Activated CD8-positive, alpha-beta memory T cell treated with anti-CD3 and anti-CD28 coated beads, Interleukin-2, amount 10 ng/mL, durations not matched to agents 7 days and 5 days (primary cell): ENCODE measurements at regions of chr16 and their contacts with region 1.

Region 1: GRCh38 chr16:57576429-57576870 is 34.0 kb downstream of the ADGRG5 start:
- DNase-seq: peak; percentile 92
- ATAC-seq: peak; percentile 70
- H3K4me3 Mint-ChIP-seq: no peak overlapping the region
- H3K27ac Mint-ChIP-seq: peak overlapping the region; percentile 91
- H3K4me1 Mint-ChIP-seq: peaks cover 61% of the 10 kb centered on the region
- H3K27me3 Mint-ChIP-seq: no peaks in the 10 kb centered on the region

Region 2: DNA sequence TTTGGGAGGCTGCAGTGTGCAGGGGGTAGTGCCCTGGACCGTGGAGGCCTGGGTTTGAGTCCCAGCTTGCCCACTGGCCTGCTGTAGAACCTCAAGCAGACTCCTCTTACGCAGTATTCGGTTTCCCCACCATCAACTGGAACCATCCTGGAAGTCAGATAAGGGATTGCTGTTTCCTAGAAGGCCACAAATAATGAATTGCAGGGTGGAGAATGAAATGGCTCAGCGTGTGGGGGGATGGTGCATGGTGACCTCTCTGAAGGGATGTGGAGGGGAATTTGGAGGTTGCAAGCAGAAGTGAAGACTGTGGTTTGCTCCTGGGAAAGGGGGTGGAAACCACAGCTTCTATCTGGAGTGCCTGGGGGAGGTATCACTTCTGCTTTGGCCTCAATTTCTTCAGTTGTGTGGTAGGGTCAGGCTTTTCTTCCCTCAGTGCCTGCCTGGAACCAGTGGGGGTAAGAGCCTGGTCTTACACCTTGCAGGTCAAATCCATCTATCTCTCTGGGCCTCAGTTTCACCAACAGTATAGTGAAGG is 32.3 kb before region 1 on chr16:
- CTCF ChIA-PET with region 1: interaction called, 22 read pairs
- DNase-seq: peak; percentile 48
- ATAC-seq: no peak
- H3K4me3 Mint-ChIP-seq: peak overlapping the region; percentile 75
- H3K27ac Mint-ChIP-seq: peak overlapping the region; percentile 87
- H3K4me1 Mint-ChIP-seq: peaks cover 79% of the 10 kb centered on the region
- H3K27me3 Mint-ChIP-seq: no peaks in the 10 kb centered on the region

Region 3: DNA sequence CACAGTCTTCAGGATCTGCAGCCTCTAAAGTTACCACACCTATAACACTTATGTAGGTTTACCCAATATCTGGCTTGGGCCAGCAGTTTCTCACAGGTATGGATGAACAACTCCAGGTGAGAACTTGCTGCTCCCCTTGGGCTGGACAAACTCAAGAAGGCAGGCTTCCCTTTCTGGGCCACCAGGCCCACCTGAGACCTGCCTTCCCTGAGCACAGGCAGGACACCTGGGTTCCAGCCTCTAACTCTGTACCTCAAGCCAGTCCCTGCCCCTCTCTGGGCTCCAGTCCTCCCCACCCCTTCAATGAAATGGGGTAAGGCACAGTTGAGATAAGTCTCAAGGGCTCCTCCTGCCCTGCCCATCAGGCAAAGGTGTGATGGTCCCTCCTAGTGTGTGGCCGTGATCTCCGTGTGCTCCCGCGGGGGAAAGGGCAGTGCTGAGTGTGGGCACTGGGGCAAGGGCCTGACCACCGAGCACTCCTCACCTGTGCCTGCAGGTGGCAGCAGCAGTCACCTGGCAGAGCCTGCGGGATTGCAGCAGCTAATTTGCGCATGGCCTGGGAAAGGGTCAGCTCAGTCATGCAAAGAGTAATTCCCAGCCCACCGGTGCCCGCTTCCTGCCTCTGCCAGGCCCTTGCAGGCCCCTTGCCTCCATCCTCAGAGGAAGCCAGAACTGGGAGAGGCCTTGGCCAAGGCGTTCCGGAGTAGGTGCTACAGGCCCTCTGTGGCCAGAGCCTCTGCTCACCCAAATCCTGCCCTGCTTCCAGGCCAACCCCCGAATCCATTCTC is 23.8 kb after region 1 on chr16:
- CTCF ChIA-PET with region 1: interaction called, 210 read pairs
- DNase-seq: peak; percentile 65
- ATAC-seq: no peak
- H3K4me3 Mint-ChIP-seq: no peak overlapping the region
- H3K27ac Mint-ChIP-seq: peak overlapping the region; percentile 99
- H3K4me1 Mint-ChIP-seq: peaks cover 72% of the 10 kb centered on the region
- H3K27me3 Mint-ChIP-seq: no peaks in the 10 kb centered on the region

Region 4: GRCh38 chr16:57639172-57639887 is 62.9 kb after region 1 on chr16:
- CTCF ChIA-PET with region 1: interaction called, 15 read pairs
- DNase-seq: no peak
- ATAC-seq: no peak
- H3K4me3 Mint-ChIP-seq: no peak overlapping the region
- H3K27ac Mint-ChIP-seq: no peak overlapping the region
- H3K4me1 Mint-ChIP-seq: no peaks in the 10 kb centered on the region
- H3K27me3 Mint-ChIP-seq: peaks cover 14% of the 10 kb centered on the region

Region 5: DNA sequence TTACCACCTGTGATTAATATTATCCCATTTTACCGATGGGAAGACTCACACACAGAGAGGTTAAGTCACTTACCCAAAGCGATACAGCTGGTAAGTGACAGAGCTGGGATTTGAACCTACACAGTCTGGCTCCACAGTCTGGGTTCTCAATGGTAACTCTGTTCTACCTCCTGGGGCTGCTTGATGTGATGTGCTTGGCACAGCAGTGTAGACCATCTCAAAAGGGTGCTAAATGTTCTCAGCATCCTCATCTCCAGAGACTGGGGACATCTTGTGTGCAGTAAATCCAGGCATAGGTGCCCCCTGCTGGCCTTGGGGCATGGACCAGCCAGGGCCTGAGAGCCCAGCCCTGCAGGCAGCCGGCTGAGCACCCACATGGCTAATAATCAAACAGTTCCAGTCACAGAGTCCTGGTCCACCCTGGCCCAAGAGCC is 143.7 kb after region 1 on chr16:
- CTCF ChIA-PET with region 1: interaction called, 17 read pairs
- DNase-seq: peak; percentile 80
- ATAC-seq: peak; percentile 93
- H3K4me3 Mint-ChIP-seq: no peak overlapping the region
- H3K27ac Mint-ChIP-seq: no peak overlapping the region
- H3K4me1 Mint-ChIP-seq: peaks cover 4% of the 10 kb centered on the region
- H3K27me3 Mint-ChIP-seq: peaks cover 6% of the 10 kb centered on the region

Region 6: GRCh38 chr16:57757326-57757786 is 180.9 kb after region 1 on chr16:
- CTCF ChIA-PET with region 1: interaction called, 18 read pairs
- DNase-seq: peak; percentile 91
- ATAC-seq: peak; percentile 97
- H3K4me3 Mint-ChIP-seq: no peak overlapping the region
- H3K27ac Mint-ChIP-seq: no peak overlapping the region
- H3K4me1 Mint-ChIP-seq: peaks cover 5% of the 10 kb centered on the region
- H3K27me3 Mint-ChIP-seq: no peaks in the 10 kb centered on the region